Activated naive CD4-positive, alpha-beta T cell treated with anti-CD3 and anti-CD28 coated beads for 36 hours (primary cell): ENCODE measurements at regions of chr3 and their contacts with region 1.

Region 1: GRCh38 chr3:71064288-71064955 is 519.1 kb downstream of the FOXP1 start:
- DNase-seq: peak; percentile 69
- H3K4me3 Mint-ChIP-seq: no peak overlapping the region
- H3K27ac Mint-ChIP-seq: no peak overlapping the region
- H3K4me1 Mint-ChIP-seq: peaks cover 51% of the 10 kb centered on the region
- H3K27me3 Mint-ChIP-seq: no peaks in the 10 kb centered on the region

Region 2: GRCh38 chr3:69084326-69085167 is 1979.9 kb before region 1 on chr3 and contains the start of gene ARL6IP5:
- CTCF ChIA-PET with region 1: no interaction called
- intact Hi-C with region 1: loop called (anchors 5 kb)
- DNase-seq: peak; percentile 97
- H3K4me3 Mint-ChIP-seq: peak within 1 kb of the TSS; percentile 89
- H3K27ac Mint-ChIP-seq: peak within 1 kb of the TSS; percentile 95
- H3K4me1 Mint-ChIP-seq: peaks cover 57% of the 10 kb centered on the region
- H3K27me3 Mint-ChIP-seq: no peaks in the 10 kb centered on the region
- total RNA-seq, gene ARL6IP5: 66.4 to 71.5 TPM

Region 3: DNA sequence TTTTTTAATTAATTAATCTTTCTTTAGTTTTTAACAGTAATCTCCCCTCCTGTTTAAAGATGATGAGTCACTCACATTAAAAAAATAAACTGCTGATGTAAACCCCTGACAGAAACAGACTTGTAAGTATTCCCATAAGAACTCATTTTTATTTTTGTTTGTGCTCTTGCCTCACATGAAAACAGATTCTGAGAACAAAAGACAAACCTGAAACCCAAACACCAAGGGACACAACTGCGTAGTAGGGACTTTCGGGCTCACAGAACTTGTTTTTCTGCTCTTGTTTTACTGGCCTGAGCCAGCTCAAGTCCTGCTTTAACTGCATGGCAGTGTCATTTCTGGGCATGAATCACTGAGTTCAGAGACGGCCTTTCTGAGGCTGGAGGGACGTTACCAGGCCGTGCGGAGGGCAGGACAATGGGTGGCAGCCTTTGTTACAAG is 81.7 kb before region 1 on chr3:
- CTCF ChIA-PET with region 1: no interaction called
- intact Hi-C with region 1: loop called (anchors 1 kb)
- DNase-seq: peak; percentile 66
- H3K4me3 Mint-ChIP-seq: no peak overlapping the region
- H3K27ac Mint-ChIP-seq: peak overlapping the region; percentile 96
- H3K4me1 Mint-ChIP-seq: peaks cover 74% of the 10 kb centered on the region
- H3K27me3 Mint-ChIP-seq: no peaks in the 10 kb centered on the region

Region 4: DNA sequence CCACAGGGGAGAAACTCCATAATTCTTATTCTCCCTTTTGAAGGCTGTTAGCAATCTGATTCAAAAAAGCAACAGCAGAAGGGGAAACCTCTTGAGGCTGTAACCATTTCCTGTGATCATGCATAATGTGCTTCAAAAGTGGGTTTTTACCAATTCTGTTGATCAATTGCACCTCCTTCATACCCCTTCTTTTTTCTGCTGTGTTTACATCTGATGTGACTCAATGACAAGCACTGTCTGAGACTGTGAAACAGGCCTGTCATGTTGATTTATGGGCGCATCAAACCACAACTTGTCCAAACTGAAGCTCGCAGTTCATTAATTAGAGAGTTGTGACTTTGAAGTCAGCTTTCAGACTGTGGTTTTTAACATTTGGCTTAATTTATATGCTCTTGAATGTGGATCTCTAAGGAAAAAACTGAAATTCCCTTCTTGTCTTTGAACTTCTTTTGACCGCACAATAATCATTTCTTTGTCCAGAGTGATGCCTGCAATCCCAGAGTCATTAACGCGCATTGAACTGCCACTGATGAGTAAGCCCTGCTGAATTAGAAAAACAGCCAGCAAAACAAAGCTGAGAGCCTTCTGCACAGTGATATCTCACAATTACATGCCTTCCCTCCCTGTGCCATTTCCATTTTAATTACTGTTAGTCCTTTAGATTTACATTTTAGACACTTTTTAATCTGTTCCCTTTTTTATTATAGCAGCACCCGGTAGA is 13.7 kb before region 1 on chr3:
- CTCF ChIA-PET with region 1: interaction called, 12 read pairs
- intact Hi-C with region 1: loop called (anchors 1 kb)
- DNase-seq: peak; percentile 77
- H3K4me3 Mint-ChIP-seq: peak overlapping the region; percentile 6
- H3K27ac Mint-ChIP-seq: peak overlapping the region; percentile 92
- H3K4me1 Mint-ChIP-seq: peaks cover 100% of the 10 kb centered on the region
- H3K27me3 Mint-ChIP-seq: no peaks in the 10 kb centered on the region

Region 5: GRCh38 chr3:71138410-71138809 is 74.0 kb after region 1 on chr3:
- CTCF ChIA-PET with region 1: no interaction called
- intact Hi-C with region 1: no loop called
- DNase-seq: no peak
- H3K4me3 Mint-ChIP-seq: no peak overlapping the region
- H3K27ac Mint-ChIP-seq: no peak overlapping the region
- H3K4me1 Mint-ChIP-seq: peaks cover 76% of the 10 kb centered on the region
- H3K27me3 Mint-ChIP-seq: no peaks in the 10 kb centered on the region

Region 6: GRCh38 chr3:71380096-71380495 is 315.7 kb after region 1 on chr3:
- CTCF ChIA-PET with region 1: no interaction called
- intact Hi-C with region 1: loop called (anchors 2 kb)
- DNase-seq: no peak
- H3K4me3 Mint-ChIP-seq: no peak overlapping the region
- H3K27ac Mint-ChIP-seq: peak overlapping the region; percentile 69
- H3K4me1 Mint-ChIP-seq: peaks cover 88% of the 10 kb centered on the region
- H3K27me3 Mint-ChIP-seq: no peaks in the 10 kb centered on the region

Region 7: GRCh38 chr3:71461749-71462465 is 397.5 kb after region 1 on chr3:
- CTCF ChIA-PET with region 1: no interaction called
- intact Hi-C with region 1: loop called (anchors 1 kb)
- DNase-seq: no peak
- H3K4me3 Mint-ChIP-seq: no peak overlapping the region
- H3K27ac Mint-ChIP-seq: peak overlapping the region; percentile 93
- H3K4me1 Mint-ChIP-seq: peaks cover 85% of the 10 kb centered on the region
- H3K27me3 Mint-ChIP-seq: no peaks in the 10 kb centered on the region